ENCODE measurements at regions of chr15 and their contacts with region 1.

Region 1: GRCh38 chr15:39747326-39747725 is 35.3 kb downstream of the FSIP1 start:
- DNase-seq: no peak
- ATAC-seq: no peak
- H3K4me3 ChIP-seq: no peak overlapping the region
- H3K27ac ChIP-seq: no peak overlapping the region
- H3K4me1 ChIP-seq: no peaks in the 10 kb centered on the region
- H3K27me3 ChIP-seq: no peaks in the 10 kb centered on the region

Region 2: DNA sequence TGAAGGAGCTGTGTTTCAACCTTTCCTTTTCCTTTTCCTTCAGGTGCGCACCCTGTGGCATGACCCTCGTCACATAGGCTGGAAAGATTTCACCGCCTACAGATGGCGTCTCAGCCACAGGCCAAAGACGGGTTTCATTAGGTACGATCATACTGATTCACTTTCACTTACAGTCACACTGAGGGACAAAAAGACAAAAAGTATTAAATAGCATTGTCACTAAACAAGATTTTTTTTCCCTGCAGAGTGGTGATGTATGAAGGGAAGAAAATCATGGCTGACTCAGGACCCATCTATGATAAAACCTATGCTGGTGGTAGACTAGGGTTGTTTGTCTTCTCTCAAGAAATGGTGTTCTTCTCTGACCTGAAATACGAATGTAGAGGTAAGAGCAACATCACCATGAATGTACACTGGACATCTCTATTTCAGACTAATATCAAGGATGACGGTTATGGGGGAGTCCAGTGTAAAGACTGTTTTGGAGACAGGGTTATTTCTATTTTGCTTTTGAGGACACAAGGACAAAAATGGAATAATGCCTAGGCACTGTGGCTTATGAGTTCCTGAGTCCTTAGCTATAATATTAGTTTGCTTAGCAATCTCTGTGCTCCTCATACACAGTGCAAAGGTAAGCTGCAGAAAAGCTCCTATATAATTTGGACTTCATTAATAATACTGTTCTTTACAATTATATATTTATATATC is 153.1 kb before region 1 on chr15:
- intact Hi-C with region 1: loop called in 2 of 4 experiments (anchors 10 kb)
- DNase-seq: no peak
- ATAC-seq: no peak
- H3K4me3 ChIP-seq: no peak overlapping the region
- H3K27ac ChIP-seq: no peak overlapping the region
- H3K4me1 ChIP-seq: no peaks in the 10 kb centered on the region
- H3K27me3 ChIP-seq: no peaks in the 10 kb centered on the region

Region 3: GRCh38 chr15:39828374-39828931 is 81.1 kb after region 1 on chr15:
- intact Hi-C with region 1: no loop called
- DNase-seq: peak; percentile 12 to 50 (median 49)
- ATAC-seq: peak in 1 of 2 donors; percentile 73
- H3K4me3 ChIP-seq: no peak overlapping the region
- H3K27ac ChIP-seq: no peak overlapping the region
- H3K4me1 ChIP-seq: no peaks in the 10 kb centered on the region
- H3K27me3 ChIP-seq: no peaks in the 10 kb centered on the region